Activated CD8-positive, alpha-beta T cell treated with anti-CD3 and anti-CD28 coated beads, Interleukin-2, amount 10 ng/mL, durations not matched to agents 7 days and 5 days (primary cell): ENCODE measurements at regions of chr5 and their contacts with region 1.

Region 1: GRCh38 chr5:75351139-75351926 is 14.3 kb downstream of the HMGCR start:
- DNase-seq: no peak
- ATAC-seq: peak; percentile 27
- H3K4me3 Mint-ChIP-seq: no peak overlapping the region
- H3K27ac Mint-ChIP-seq: peak overlapping the region; percentile 36
- H3K4me1 Mint-ChIP-seq: peaks cover 22% of the 10 kb centered on the region
- H3K27me3 Mint-ChIP-seq: no peaks in the 10 kb centered on the region

Region 2: DNA sequence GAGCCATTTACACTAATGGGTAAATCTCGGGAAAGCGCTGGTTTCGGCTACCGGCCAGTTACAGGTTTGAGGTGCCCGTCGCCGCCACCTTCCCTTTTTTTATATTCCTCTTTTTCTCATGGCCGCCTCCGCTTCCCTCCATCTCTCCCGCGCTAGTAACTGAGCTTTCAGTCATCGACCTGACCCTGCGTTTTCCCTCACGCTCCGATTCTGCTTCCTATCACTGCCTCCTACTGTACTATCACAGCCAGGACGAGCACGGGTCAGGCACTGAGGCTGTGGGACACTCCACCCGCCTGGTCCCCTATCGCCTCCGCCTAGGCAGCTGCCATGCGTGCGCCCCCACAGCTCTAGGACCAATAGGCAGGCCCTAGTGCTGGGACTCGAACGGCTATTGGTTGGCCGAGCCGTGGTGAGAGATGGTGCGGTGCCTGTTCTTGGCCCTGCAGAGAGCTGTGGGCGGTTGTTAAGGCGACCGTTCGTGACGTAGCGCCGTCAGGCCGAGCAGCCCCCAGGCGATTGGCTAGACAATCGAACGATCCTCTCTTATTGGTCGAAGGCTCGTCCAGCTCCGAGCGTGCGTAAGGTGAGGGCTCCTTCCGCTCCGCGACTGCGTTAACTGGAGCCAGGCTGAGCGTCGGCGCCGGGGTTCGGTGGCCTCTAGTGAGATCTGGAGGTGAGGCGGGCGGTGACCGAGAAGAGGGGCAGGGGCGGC is 14.6 kb before region 1 on chr5 and contains the start of gene HMGCR:
- CTCF ChIA-PET with region 1: interaction called, 4 read pairs
- POLR2A ChIA-PET with region 1: interaction called, 15 read pairs
- DNase-seq: peak; percentile 99
- ATAC-seq: peak; percentile 98
- H3K4me3 Mint-ChIP-seq: no peak within 1 kb of the TSS
- H3K27ac Mint-ChIP-seq: no peak within 1 kb of the TSS
- H3K4me1 Mint-ChIP-seq: peaks cover 34% of the 10 kb centered on the region
- H3K27me3 Mint-ChIP-seq: no peaks in the 10 kb centered on the region
- total RNA-seq, gene HMGCR: 64.1 to 70.5 TPM